Endothelial cell of umbilical vein (primary cell): ENCODE measurements at regions of chr7 and their contacts with region 1.

Region 1: DNA sequence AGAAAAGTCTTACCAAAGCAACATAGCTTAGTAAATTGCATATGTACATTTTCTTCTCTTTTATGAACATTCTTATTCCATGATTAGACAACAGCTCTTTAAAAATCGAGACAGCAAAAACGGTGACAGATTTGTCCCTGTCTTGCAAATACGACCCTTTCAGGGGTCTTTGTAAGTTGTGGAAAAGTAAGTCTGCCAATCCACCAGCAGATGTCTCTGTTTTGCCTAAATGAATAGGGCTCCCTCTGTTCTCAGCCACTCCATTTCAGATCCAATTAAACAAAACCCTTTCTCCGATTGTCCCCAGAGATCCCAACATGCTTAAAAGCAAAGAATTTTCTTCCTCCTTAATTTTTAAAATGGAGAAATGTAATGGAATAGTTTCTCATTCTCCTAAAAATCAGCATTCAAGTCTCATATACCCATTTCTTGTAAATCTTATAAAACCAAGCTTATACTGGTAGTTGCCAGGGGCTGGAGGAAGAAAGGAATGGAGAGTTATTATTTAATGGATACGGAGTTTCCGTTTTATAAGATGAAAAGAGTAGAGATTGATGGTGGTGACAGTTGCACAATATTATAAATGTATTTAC is 61.0 kb upstream of the NFE2L3 start:
- DNase-seq: peak; percentile 74
- H3K4me3 ChIP-seq: no peak overlapping the region
- H3K27ac ChIP-seq: no peak overlapping the region
- H3K4me1 ChIP-seq: no peaks in the 10 kb centered on the region
- H3K27me3 ChIP-seq: peaks cover 0 to 3% of the 10 kb centered on the region in 2 experiments
- CTCF ChIP-seq: peak; percentile 54 to 62
- POLR2A ChIP-seq: no peak

Region 2: DNA sequence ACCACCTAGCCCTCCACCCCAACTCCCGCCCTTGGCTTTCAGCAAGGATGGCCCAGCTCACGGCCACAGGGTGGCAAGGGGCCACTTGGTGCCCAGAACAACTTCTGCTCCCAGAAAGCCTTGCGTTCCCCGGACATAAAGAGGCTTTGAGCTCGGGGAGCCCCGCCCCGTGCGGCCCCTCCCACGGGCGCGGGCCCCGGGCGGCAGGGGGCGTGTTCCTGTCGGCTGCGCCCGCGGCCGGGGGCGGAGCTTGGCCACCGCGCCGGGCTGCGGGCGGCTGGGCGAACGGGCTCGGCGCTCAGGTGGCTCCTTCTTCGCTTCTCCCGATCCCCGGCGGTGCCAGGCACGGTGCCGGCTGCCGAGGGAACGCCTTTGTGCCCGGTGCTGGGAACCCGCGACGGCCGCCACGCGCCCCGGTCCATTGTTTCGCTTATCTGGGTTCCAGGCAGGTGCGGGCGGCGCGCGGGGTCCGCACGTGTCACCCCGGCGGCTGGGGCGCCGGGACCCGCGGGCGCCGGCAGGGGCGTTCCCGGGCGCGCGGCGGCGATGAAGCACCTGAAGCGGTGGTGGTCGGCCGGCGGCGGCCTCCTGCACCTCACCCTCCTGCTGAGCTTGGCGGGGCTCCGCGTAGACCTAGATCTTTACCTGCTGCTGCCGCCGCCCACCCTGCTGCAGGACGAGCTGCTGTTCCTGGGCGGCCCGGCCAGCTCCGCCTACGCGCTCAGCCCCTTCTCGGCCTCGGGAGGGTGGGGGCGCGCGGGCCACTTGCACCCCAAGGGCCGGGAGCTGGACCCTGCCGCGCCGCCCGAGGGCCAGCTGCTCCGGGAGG is 61.1 kb after region 1 on chr7 and contains the start of gene NFE2L3:
- CTCF ChIA-PET with region 1: interaction called, 10 read pairs
- POLR2A ChIA-PET with region 1: no interaction called
- dilution Hi-C with region 1: no loop called
- intact Hi-C with region 1: loop called (anchors 5 kb)
- DNase-seq: peak; percentile 77
- H3K4me3 ChIP-seq: peak within 1 kb of the TSS; percentile 42 to 71 (median 68)
- H3K27ac ChIP-seq: peak within 1 kb of the TSS; percentile 92
- H3K4me1 ChIP-seq: peaks cover 45% of the 10 kb centered on the region
- H3K27me3 ChIP-seq: peaks cover 0 to 4% of the 10 kb centered on the region in 2 experiments
- CTCF ChIP-seq: peak in 1 of 2 donors; percentile 7
- POLR2A ChIP-seq: peak; percentile 46
- total RNA-seq, gene NFE2L3: 28.4 and 40.2 TPM in 2 replicates

Region 3: DNA sequence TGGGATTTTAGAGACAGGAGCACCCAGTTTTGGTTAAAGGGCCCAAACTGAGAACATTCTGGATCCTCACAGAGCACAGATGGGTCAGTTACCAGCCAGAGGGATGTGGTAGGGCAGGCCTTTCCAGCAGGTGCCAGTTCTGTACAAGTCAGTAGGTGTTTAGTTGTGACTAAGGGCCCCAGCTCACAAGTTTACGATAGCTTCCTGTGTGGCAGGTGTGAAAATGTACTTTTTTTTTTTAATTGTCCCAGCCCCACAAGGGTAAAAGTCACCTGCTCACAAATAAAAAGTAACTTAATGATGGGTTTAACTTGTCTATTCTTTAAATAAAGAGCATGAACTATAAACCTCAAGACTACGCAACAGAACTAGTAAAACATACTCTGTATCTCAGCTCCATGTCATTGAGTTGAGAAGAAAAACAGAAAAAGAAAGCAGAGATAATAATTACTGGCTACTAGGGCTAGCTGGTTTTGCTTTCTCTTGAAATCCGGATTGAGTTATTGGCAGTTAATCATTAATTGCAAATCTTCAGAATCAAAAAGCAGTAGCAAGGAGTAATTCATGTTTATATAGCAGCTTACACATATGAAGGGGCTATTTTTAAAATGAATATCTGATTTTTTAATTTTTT is 76.4 kb after region 1 on chr7:
- CTCF ChIA-PET with region 1: interaction called, 14 read pairs
- POLR2A ChIA-PET with region 1: no interaction called
- dilution Hi-C with region 1: no loop called
- intact Hi-C with region 1: no loop called
- DNase-seq: no peak
- H3K4me3 ChIP-seq: no peak overlapping the region
- H3K27ac ChIP-seq: no peak overlapping the region
- H3K4me1 ChIP-seq: no peaks in the 10 kb centered on the region
- H3K27me3 ChIP-seq: no peaks in the 10 kb centered on the region
- CTCF ChIP-seq: no peak
- POLR2A ChIP-seq: no peak

Region 4: DNA sequence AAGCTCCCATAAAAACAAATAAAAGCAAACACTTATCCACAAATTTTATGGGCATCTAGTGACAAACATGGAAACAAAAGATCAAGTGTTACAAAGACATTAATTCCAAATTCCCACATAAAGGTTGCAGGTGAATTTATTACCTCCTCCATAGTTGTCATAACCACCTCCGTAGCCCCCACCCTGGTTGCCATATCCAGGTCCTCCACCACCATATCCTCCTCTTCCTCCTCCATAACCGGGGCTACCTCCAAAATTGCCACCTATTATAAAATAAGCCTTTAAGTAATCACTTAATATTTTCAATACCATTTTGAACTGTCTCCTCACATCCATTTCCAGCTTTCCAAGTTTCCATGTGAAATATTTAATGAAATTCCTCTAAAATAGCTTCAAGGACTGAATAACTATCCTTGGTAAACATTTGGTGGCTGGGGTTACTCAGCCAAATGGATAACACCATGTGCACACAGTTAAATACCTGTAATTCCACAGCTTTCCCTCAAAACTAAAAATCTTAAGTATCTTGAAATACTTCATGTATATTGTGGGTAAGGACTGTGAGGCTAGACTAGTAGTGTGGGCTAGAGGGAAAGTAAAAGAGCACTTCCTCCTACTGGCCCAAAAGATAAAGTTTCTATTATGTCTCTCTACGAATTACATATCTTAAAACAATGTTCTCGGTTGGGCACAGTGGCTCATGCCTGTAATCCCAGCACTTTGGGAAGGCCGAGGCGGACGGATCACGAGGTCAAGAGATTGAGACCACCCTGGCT is 102.6 kb after region 1 on chr7:
- CTCF ChIA-PET with region 1: interaction called, 98 read pairs
- POLR2A ChIA-PET with region 1: no interaction called
- dilution Hi-C with region 1: no loop called
- intact Hi-C with region 1: loop called (anchors 1 kb)
- DNase-seq: no peak
- H3K4me3 ChIP-seq: peak overlapping the region in 1 of 3 experiments; percentile 26
- H3K27ac ChIP-seq: no peak overlapping the region
- H3K4me1 ChIP-seq: peaks cover 48% of the 10 kb centered on the region
- H3K27me3 ChIP-seq: no peaks in the 10 kb centered on the region
- CTCF ChIP-seq: no peak
- POLR2A ChIP-seq: no peak

Region 5: GRCh38 chr7:26284995-26285632 is 194.1 kb after region 1 on chr7:
- CTCF ChIA-PET with region 1: interaction called, 17 read pairs
- POLR2A ChIA-PET with region 1: no interaction called
- dilution Hi-C with region 1: no loop called
- intact Hi-C with region 1: no loop called
- DNase-seq: no peak
- H3K4me3 ChIP-seq: no peak overlapping the region
- H3K27ac ChIP-seq: no peak overlapping the region
- H3K4me1 ChIP-seq: no peaks in the 10 kb centered on the region
- H3K27me3 ChIP-seq: peaks cover 2 to 3% of the 10 kb centered on the region in 2 experiments
- CTCF ChIP-seq: no peak
- POLR2A ChIP-seq: no peak